MCF 10A (cell line): ENCODE measurements at regions of chr10 and their contacts with region 1.

Region 1: DNA sequence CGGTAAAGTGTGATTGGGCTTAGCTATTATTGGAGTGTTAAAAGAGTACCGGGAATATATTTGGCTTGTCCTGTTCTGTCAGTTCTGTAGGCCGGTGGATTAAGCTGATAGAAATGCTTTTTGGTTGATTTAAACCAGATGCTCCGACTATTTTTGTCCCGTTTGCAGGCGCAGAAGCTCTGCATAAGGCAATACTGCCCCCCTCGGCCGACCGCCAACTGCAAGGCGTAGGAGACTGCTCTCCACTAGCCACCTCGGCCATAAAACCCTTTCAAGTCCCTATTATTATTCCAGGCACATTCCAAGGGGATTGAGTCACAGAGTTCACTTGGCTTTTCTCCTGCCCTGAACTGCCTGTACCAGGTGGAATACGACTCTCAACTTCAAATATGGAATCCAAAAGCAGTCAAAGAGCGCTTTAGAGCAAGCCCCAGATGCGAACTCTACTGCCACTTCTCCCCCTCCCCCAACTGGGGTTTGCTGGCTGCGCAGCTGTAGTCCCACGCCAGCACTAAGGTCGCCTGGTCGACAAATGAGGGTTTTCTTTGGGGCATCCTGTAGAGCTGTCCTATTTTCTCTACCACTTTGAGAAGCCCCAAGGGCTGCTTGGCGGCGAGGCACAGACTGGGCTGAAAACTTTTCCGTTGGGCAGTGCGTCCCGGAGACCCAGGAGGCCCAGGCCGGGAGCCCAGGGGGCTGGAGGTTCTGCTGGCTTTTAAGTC is 108.3 kb downstream of the REEP3 start:
- DNase-seq: peak; percentile 98
- H3K4me3 Mint-ChIP-seq: peak overlapping the region; percentile 94
- H3K27ac Mint-ChIP-seq: peak overlapping the region; percentile 94
- H3K4me1 Mint-ChIP-seq: peaks cover 26% of the 10 kb centered on the region
- H3K27me3 Mint-ChIP-seq: no peaks in the 10 kb centered on the region
- CTCF ChIP-seq: peak; percentile 73

Region 2: DNA sequence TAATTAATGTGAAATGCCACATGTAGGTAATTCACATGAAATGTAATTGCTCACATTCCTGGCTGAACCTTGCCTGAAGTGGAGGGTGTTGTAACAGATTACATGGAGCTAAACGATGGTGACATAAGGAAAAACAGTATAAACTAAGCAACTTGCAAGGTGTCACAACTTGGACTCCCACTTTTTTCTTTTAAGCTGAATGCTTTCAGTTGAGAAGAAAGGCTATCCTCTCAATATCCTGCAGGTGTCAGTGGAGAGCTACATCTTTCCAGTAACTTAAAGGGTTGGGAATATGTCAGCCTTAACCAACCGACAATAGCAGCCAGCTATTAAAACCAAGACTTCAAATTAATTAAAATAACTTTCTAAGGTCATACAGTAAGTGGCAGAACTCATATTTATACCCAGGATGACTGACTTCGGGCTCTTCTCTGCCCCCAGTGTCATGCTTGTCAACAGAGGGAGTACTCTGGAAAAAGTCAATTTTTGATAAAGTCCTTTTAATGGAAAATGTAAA is 462.7 kb before region 1 on chr10:
- CTCF ChIA-PET with region 1: interaction called, 87 read pairs
- POLR2A ChIA-PET with region 1: interaction called, 16 read pairs
- intact Hi-C with region 1: loop called (anchors 1 kb)
- DNase-seq: peak; percentile 83
- H3K4me3 Mint-ChIP-seq: no peak overlapping the region
- H3K27ac Mint-ChIP-seq: no peak overlapping the region
- H3K4me1 Mint-ChIP-seq: no peaks in the 10 kb centered on the region
- H3K27me3 Mint-ChIP-seq: no peaks in the 10 kb centered on the region
- CTCF ChIP-seq: peak; percentile 68

Region 3: DNA sequence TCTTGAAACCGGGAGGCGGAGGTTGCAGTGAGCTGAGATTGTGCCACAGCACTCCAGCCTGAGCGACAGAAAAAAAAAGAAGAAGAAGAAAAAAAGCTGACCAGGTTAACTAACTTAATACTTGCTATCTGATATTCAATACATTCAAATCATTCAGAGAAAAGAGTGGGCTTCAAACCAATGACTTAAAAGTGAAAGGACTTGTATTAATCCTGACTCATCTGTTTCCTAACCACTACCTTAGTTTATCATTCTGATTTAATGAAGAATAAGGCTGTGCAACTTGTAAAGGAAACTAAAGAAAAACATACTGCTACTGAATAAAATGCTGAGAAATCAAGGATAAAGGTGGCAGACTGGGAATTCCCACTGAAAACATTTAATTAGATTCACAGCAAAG is 368.0 kb before region 1 on chr10:
- CTCF ChIA-PET with region 1: interaction called, 4 read pairs
- POLR2A ChIA-PET with region 1: interaction called, 106 read pairs
- intact Hi-C with region 1: no loop called
- DNase-seq: no peak
- H3K4me3 Mint-ChIP-seq: no peak overlapping the region
- H3K27ac Mint-ChIP-seq: peak overlapping the region; percentile 54
- H3K4me1 Mint-ChIP-seq: peaks cover 43% of the 10 kb centered on the region
- H3K27me3 Mint-ChIP-seq: no peaks in the 10 kb centered on the region
- CTCF ChIP-seq: no peak

Region 4: GRCh38 chr10:63465293-63466143 is 164.0 kb before region 1 on chr10 and contains the start of gene JMJD1C:
- CTCF ChIA-PET with region 1: interaction called, 3 read pairs
- POLR2A ChIA-PET with region 1: interaction called, 60 read pairs
- intact Hi-C with region 1: loop called (anchors 1 kb)
- DNase-seq: peak; percentile 75
- H3K4me3 Mint-ChIP-seq: peak within 1 kb of the TSS; percentile 97
- H3K27ac Mint-ChIP-seq: peak within 1 kb of the TSS; percentile 93
- H3K4me1 Mint-ChIP-seq: peaks cover 19% of the 10 kb centered on the region
- H3K27me3 Mint-ChIP-seq: no peaks in the 10 kb centered on the region
- CTCF ChIP-seq: no peak
- total RNA-seq, gene JMJD1C: 91.9 and 101 TPM in 2 replicates

Region 5: DNA sequence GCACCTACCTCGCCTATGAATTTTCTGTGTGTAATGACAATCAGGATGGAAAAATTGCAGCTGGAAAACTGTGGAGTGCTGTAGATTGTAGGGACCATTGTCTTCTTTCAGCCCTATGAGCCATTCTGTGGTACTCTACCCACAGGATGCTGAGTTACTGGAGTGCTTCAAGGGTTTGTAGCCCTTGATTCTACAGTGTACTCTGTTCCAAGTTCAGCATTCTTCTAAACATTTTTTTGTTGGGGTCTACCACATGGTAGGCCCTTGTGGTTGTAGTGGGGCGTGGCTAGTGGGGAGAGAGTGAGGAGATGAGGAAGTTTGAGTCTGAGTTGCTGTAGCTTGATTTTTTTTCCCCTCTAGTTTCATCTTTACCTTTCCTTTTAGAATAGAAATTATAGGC is 74.9 kb before region 1 on chr10:
- CTCF ChIA-PET with region 1: interaction called, 4 read pairs
- POLR2A ChIA-PET with region 1: interaction called, 30 read pairs
- intact Hi-C with region 1: no loop called
- DNase-seq: peak; percentile 12
- H3K4me3 Mint-ChIP-seq: peak overlapping the region; percentile 56
- H3K27ac Mint-ChIP-seq: peak overlapping the region; percentile 90
- H3K4me1 Mint-ChIP-seq: peaks cover 41% of the 10 kb centered on the region
- H3K27me3 Mint-ChIP-seq: no peaks in the 10 kb centered on the region
- CTCF ChIP-seq: no peak

Region 6: GRCh38 chr10:63641799-63642198 is 12.3 kb after region 1 on chr10:
- CTCF ChIA-PET with region 1: interaction called, 3 read pairs
- POLR2A ChIA-PET with region 1: interaction called, 15 read pairs
- intact Hi-C with region 1: no loop called
- DNase-seq: no peak
- H3K4me3 Mint-ChIP-seq: no peak overlapping the region
- H3K27ac Mint-ChIP-seq: no peak overlapping the region
- H3K4me1 Mint-ChIP-seq: no peaks in the 10 kb centered on the region
- H3K27me3 Mint-ChIP-seq: no peaks in the 10 kb centered on the region
- CTCF ChIP-seq: no peak

Region 7: DNA sequence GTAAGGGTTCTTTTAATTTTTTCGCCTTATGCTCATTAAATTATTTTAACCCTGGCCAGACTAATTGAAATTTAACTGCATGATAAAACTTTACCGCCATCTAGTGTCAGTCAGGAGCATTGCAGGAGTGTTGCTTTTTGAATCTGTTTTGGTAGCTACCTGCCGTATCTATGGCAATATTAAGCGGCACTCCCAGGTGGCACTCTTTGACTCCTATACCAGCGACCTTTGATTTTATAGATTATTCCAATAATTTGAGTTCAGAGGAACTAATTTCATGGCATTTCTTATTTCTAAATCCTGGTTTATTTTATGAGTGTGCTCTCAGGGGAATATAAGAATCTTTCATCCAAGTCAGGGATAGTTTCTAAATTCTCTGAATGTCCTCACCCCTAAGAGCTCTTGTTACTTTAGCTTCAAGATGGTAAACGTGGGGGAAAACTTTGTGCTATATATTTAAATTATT is 90.6 kb after region 1 on chr10:
- CTCF ChIA-PET with region 1: interaction called, 26 read pairs
- POLR2A ChIA-PET with region 1: interaction called, 14 read pairs
- intact Hi-C with region 1: loop called (anchors 1 kb)
- DNase-seq: peak; percentile 74
- H3K4me3 Mint-ChIP-seq: no peak overlapping the region
- H3K27ac Mint-ChIP-seq: no peak overlapping the region
- H3K4me1 Mint-ChIP-seq: no peaks in the 10 kb centered on the region
- H3K27me3 Mint-ChIP-seq: peaks cover 7% of the 10 kb centered on the region
- CTCF ChIP-seq: peak; percentile 93

Region 8: DNA sequence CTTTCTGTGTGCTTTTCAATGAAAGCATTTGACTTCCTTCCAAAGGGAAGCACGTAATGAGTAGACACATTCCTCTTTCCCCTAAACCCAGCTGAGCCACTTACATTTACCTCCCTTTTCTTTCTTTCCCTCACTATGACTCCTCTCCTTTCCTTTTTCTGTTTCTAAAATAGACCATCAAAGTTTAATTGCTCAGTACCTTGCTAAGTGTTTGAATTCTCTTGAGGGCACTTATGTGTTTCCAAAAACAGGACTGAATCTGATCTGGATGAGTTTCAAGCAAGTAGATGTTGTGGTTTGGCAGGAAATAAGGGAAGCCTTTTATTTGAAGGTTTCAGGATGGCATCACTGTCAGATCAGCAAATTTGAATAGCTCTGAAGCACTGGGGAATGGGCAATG is 287.8 kb after region 1 on chr10:
- CTCF ChIA-PET with region 1: no interaction called
- POLR2A ChIA-PET with region 1: no interaction called
- intact Hi-C with region 1: no loop called
- DNase-seq: no peak
- H3K4me3 Mint-ChIP-seq: no peak overlapping the region
- H3K27ac Mint-ChIP-seq: no peak overlapping the region
- H3K4me1 Mint-ChIP-seq: peaks cover 4% of the 10 kb centered on the region
- H3K27me3 Mint-ChIP-seq: no peaks in the 10 kb centered on the region
- CTCF ChIP-seq: no peak

Region 9: GRCh38 chr10:63935705-63936104 is 306.2 kb after region 1 on chr10:
- CTCF ChIA-PET with region 1: no interaction called
- POLR2A ChIA-PET with region 1: no interaction called
- intact Hi-C with region 1: no loop called
- DNase-seq: peak; percentile 22
- H3K4me3 Mint-ChIP-seq: no peak overlapping the region
- H3K27ac Mint-ChIP-seq: no peak overlapping the region
- H3K4me1 Mint-ChIP-seq: no peaks in the 10 kb centered on the region
- H3K27me3 Mint-ChIP-seq: peaks cover 22% of the 10 kb centered on the region
- CTCF ChIP-seq: peak; percentile 26